Colonic mucosa (tissue), 4 donors: ENCODE measurements at regions of chr5 and their contacts with region 1.

Region 1: GRCh38 chr5:160649304-160649703 is 202.7 kb downstream of the ATP10B start:
- DNase-seq: no peak
- H3K4me3 ChIP-seq: no peak overlapping the region
- H3K27ac ChIP-seq: no peak overlapping the region
- H3K4me1 ChIP-seq: no peaks in the 10 kb centered on the region
- H3K27me3 ChIP-seq: no peaks in the 10 kb centered on the region
- CTCF ChIP-seq: peak; percentile 34

Region 2: DNA sequence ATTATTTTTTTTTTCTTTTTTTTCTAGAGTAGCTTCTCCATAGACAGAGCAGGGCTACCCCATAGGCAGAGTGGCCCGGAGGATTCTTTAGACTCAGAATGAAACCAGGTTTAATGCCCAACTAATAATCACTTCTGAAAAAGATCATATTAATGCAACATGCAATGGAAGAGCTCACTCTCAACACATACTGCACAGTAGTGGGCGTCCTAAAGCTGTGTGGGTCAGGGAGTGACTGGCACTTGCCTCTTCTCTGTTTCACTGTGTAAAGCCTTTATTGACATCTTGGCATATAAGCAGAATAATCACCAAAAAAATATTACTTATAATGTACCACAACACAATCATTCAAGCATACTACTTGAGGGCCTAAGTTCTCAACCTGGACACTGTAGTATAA is 541.2 kb before region 1 on chr5:
- intact Hi-C with region 1: no loop called
- DNase-seq: no peak
- H3K4me3 ChIP-seq: no peak overlapping the region
- H3K27ac ChIP-seq: no peak overlapping the region
- H3K4me1 ChIP-seq: no peaks in the 10 kb centered on the region
- H3K27me3 ChIP-seq: no peaks in the 10 kb centered on the region
- CTCF ChIP-seq: no peak

Region 3: DNA sequence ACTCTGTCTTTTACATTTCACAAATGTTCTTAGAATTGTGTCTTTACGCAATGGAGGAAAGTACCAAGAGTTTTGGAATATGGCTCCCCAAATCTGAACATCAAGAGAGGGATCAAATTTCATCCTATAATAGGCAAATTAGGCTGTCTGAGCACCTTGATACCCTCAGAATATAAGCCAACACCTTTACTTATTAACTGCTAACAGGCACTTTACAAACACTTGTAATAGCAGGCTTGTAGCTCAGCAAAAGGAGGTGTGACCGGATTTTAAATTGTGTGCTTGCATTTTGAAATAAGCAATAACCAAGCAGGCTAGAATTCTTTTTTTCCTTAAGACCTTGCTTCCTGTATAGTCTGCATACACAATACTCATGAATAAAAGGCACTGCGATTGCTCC is 110.7 kb after region 1 on chr5:
- intact Hi-C with region 1: no loop called
- DNase-seq: no peak
- H3K4me3 ChIP-seq: no peak overlapping the region
- H3K27ac ChIP-seq: no peak overlapping the region
- H3K4me1 ChIP-seq: no peaks in the 10 kb centered on the region
- H3K27me3 ChIP-seq: no peaks in the 10 kb centered on the region
- CTCF ChIP-seq: no peak

Region 4: GRCh38 chr5:160787240-160787639 is 137.9 kb after region 1 on chr5:
- intact Hi-C with region 1: loop called (anchors 5 kb)
- DNase-seq: peak; percentile 83
- H3K4me3 ChIP-seq: no peak overlapping the region
- H3K27ac ChIP-seq: no peak overlapping the region
- H3K4me1 ChIP-seq: no peaks in the 10 kb centered on the region
- H3K27me3 ChIP-seq: no peaks in the 10 kb centered on the region
- CTCF ChIP-seq: peak; percentile 62